ENCODE measurements at regions of chr19 and their contacts with region 1.

Region 1: GRCh38 chr19:45178262-45179071 is at the start of gene BLOC1S3:
- DNase-seq: peak; percentile 100
- ATAC-seq: peak; percentile 99
- total RNA-seq, gene BLOC1S3: 5.2 TPM

Region 2: DNA sequence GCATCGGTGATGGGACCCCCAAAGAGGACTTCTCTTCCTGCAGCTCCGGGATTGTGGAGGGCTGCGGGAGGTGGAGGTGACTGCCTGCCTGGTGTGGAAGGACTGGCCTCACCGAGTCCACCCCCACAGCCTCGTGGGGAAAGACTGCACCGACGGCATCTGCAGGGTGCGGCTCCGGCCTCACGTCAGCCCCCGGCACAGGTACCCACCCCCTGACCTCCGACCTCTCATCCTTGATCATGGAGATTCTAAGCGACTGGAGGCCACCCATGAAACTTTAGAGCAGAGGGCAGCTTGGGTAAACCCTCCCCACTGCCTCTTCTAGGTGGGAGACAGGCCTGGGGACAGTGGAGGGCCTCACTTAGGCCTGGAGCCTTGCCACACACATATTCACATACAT is 156.5 kb before region 1 on chr19:
- intact Hi-C with region 1: no loop called
- DNase-seq: no peak
- ATAC-seq: no peak

Region 3: DNA sequence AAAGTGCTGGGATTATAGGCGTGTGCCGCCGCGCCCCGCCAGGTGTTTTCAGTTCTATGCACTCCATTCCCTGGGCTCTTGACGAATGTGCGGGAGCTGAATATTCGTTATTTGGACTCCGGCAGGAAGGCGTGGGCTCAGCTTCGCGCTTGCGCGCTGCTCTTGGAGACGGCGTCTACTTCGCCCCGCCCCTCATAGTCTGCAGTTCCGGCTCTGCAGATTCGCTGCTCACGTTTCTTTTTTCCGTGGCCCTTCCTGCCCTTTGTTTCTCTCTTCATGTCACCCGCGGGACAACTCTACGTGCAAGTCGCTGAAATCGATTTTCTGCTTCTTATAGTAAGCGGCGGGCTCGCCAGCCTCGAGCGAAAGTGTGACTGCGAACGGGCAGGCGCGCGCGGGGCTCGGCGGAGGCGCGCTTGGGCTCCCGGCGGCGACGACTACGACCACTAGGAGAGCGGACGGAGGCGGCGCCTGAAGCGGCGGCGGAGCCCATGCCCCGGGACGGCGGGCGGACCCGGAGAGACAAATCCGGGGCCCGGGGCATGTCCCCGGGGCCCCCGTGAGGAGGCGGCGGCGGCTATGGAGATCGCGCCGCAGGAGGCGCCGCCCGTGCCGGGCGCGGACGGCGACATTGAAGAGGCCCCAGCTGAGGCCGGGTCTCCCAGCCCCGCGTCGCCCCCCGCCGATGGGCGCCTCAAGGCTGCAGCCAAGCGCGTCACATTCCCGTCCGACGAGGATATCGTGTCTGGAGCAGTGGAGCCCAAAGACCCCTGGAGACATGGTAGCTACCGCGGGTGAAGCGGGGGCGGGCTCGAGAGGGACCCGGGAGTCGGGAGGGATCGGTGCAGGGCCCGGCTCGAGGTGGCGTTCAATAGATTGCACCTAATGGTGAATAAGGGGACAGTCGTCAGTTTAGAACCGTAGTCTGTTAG is 85.5 kb before region 1 on chr19 and contains the start of gene PPP1R37:
- intact Hi-C with region 1: loop called (anchors 5 kb)
- DNase-seq: peak; percentile 97
- ATAC-seq: peak; percentile 90
- total RNA-seq, gene PPP1R37: 15.1 TPM

Measured in Right ventricle myocardium inferior (tissue), 1 donor.